ENCODE measurements at regions of chr1 and their contacts with region 1.

Region 1: GRCh38 chr1:181135815-181136750 is 47.6 kb downstream of the IER5 start:
- DNase-seq: peak; percentile 55
- ATAC-seq: no peak; the same call in 1 of the 2 replicates
- H3K4me3 ChIP-seq: no peak overlapping the region
- H3K27ac ChIP-seq: peak overlapping the region; percentile 78
- H3K4me1 ChIP-seq: peaks cover 21% of the 10 kb centered on the region
- H3K27me3 ChIP-seq: no peaks in the 10 kb centered on the region
- CTCF ChIP-seq: no peak

Region 2: GRCh38 chr1:181105134-181106021 is 30.7 kb before region 1 on chr1:
- CTCF ChIA-PET with region 1: interaction called, 5 read pairs
- POLR2A ChIA-PET with region 1: interaction called, 14 read pairs
- in situ Hi-C with region 1: no loop called
- intact Hi-C with region 1: no loop called
- DNase-seq: no peak
- ATAC-seq: peak; percentile 88
- H3K4me3 ChIP-seq: peak overlapping the region; percentile 66 to 81
- H3K27ac ChIP-seq: peak overlapping the region; percentile 92
- H3K4me1 ChIP-seq: peaks cover 71% of the 10 kb centered on the region
- H3K27me3 ChIP-seq: no peaks in the 10 kb centered on the region
- CTCF ChIP-seq: no peak

Measured in Panc1 (cell line).